Activated T-helper 2 cell treated with anti-CD3 and anti-CD28 coated beads, Interferon-gamma antibody, Interleukin-2, Interleukin-4, amounts not matched to agents 10 μg/mL and 5 μg/mL and 100 μg/mL, durations not matched to agents 14 hours and 24 hours and 36 hours (primary cell): ENCODE measurements at regions of chr6 and their contacts with region 1.

Region 1: DNA sequence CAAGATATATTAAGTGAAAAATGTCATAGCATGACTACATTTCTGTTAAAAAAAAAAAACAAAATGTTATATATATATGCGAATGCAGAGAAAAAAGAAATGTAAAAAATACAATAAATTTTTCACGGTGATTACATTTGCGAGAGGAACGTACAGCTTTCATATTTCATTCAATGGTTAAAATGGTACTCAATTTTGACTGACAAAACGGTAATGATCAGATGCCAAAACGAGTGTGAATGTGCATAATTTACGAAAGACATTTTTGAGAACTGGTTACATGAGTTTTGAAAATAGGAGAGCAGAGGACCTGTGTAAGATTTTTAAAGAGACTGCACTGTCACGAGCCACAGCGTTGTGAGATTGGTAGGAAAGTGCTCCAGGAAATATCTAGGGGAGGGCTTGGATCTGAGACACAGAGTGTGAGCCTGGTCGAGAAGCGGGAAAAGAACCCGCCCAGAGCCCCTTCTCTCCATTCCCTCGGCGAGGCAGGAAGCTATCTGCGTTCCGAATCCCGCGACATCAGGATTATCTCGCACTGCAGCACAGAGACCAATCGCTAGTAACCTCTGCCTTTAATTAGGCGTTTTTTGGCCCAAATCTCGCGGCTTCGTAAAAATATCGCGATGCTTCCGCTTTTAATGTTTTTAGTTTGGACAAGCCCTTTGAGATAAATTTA is 28.5 kb downstream of the TRIM27 start:
- DNase-seq: peak; percentile 90
- H3K4me3 Mint-ChIP-seq: peak overlapping the region; percentile 97
- H3K27ac Mint-ChIP-seq: peak overlapping the region; percentile 100
- H3K4me1 Mint-ChIP-seq: peaks cover 10% of the 10 kb centered on the region
- H3K27me3 Mint-ChIP-seq: peaks cover 3% of the 10 kb centered on the region

Region 2: GRCh38 chr6:28838634-28839442 is 56.4 kb before region 1 on chr6:
- intact Hi-C with region 1: loop called (anchors 1 kb)
- DNase-seq: peak; percentile 75
- H3K4me3 Mint-ChIP-seq: peak overlapping the region; percentile 97
- H3K27ac Mint-ChIP-seq: peak overlapping the region; percentile 79
- H3K4me1 Mint-ChIP-seq: peaks cover 17% of the 10 kb centered on the region
- H3K27me3 Mint-ChIP-seq: peaks cover 43% of the 10 kb centered on the region

Region 3: DNA sequence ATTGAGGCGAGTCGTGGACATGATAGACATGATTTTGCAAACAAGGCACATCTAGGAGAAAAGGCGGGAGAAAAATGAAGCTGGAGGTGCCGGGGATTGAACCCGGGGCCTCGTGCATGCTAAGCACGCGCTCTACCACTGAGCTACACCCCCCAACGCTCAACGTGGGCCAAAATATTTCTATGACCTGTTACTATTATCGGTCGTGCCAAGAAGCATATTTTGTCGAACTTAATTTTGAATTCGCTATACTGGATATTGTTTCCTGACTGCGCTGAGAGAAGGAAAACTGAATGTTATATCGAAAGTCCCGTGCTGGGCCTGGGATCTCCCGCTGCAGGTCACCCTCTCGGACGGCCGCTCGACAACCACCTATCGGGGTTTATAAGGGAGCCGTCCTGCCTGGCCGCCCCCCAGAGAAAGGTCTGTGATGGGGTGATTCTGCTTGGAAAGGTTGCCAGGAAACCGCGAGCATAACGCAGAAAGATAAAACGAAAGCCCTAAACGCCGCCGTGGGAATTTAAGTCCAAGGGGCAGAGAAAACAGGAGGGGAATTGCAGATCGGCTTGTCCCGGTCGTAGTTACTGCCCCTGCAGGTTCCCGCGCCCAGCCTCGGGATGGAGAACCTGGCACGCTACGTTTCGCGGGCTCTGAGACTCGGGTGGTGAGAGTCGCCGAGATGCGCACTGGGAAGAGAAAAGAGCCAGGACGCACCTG is 31.5 kb before region 1 on chr6:
- intact Hi-C with region 1: loop called (anchors 1 kb)
- DNase-seq: peak; percentile 78
- H3K4me3 Mint-ChIP-seq: peak overlapping the region; percentile 93
- H3K27ac Mint-ChIP-seq: peak overlapping the region; percentile 78
- H3K4me1 Mint-ChIP-seq: peaks cover 38% of the 10 kb centered on the region
- H3K27me3 Mint-ChIP-seq: peaks cover 18% of the 10 kb centered on the region

Region 4: GRCh38 chr6:28880894-28881780 is 14.1 kb before region 1 on chr6:
- intact Hi-C with region 1: loop called (anchors 1 kb)
- DNase-seq: peak; percentile 32
- H3K4me3 Mint-ChIP-seq: peak overlapping the region; percentile 72
- H3K27ac Mint-ChIP-seq: no peak overlapping the region
- H3K4me1 Mint-ChIP-seq: peaks cover 23% of the 10 kb centered on the region
- H3K27me3 Mint-ChIP-seq: peaks cover 22% of the 10 kb centered on the region

Region 5: DNA sequence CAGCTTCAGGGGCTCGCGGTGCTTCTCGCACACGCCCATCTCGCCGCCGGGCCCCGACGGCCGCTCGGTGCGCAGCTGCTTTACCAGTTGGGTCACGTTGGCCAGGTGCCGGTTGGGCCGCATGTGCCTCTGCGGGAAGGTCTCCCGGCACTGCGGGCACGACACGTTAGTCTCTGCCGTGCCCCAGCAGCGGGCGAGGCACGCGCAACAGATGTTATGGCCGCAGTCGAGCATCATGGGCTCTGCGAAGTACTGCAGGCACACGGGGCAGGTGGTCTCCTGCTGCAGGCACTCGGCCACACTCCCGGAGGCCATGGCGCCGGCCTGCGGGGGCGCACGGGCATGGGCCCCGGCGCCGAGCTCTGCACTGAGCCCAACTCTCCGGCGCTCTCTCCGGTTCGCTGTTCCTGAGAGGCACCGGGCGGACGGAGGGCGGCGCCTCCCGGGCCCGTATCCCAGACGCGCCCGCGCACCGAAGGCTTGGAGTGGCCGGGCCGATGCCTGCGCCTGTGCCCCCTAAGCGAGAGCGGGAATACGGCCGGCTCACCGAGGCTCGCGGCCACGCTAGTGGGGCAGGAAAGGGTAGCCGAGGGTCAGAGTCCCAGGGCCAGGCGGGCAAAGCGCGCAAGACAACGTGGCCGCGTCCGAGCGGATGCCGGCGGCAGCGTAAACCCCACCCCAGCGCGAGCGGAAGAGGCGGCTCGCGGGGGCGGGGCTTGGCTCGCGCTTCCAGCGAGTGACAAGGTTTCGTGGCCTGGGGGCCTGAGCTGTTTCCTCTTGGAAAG is 28.2 kb after region 1 on chr6 and contains the start of gene TRIM27:
- intact Hi-C with region 1: loop called (anchors 1 kb)
- DNase-seq: peak; percentile 78
- H3K4me3 Mint-ChIP-seq: peak within 1 kb of the TSS; percentile 93
- H3K27ac Mint-ChIP-seq: peak within 1 kb of the TSS; percentile 88
- H3K4me1 Mint-ChIP-seq: peaks cover 28% of the 10 kb centered on the region
- H3K27me3 Mint-ChIP-seq: no peaks in the 10 kb centered on the region
- total RNA-seq, gene TRIM27: 64.4 and 69.6 TPM in 2 replicates